Activated CD4-positive, alpha-beta T cell treated with anti-CD3 and anti-CD28 coated beads for 36 hours (primary cell): ENCODE measurements at regions of chr12 and their contacts with region 1.

Region 1: GRCh38 chr12:89352492-89353187 is at the start of gene DUSP6:
- DNase-seq: peak; percentile 96
- ATAC-seq: peak; percentile 83
- H3K4me3 Mint-ChIP-seq: peak within 1 kb of the TSS; percentile 86
- H3K27ac Mint-ChIP-seq: peak within 1 kb of the TSS; percentile 92
- H3K4me1 Mint-ChIP-seq: peaks cover 46% of the 10 kb centered on the region
- H3K27me3 Mint-ChIP-seq: no peaks in the 10 kb centered on the region
- total RNA-seq, gene DUSP6: 49.9 to 60.9 TPM

Region 2: DNA sequence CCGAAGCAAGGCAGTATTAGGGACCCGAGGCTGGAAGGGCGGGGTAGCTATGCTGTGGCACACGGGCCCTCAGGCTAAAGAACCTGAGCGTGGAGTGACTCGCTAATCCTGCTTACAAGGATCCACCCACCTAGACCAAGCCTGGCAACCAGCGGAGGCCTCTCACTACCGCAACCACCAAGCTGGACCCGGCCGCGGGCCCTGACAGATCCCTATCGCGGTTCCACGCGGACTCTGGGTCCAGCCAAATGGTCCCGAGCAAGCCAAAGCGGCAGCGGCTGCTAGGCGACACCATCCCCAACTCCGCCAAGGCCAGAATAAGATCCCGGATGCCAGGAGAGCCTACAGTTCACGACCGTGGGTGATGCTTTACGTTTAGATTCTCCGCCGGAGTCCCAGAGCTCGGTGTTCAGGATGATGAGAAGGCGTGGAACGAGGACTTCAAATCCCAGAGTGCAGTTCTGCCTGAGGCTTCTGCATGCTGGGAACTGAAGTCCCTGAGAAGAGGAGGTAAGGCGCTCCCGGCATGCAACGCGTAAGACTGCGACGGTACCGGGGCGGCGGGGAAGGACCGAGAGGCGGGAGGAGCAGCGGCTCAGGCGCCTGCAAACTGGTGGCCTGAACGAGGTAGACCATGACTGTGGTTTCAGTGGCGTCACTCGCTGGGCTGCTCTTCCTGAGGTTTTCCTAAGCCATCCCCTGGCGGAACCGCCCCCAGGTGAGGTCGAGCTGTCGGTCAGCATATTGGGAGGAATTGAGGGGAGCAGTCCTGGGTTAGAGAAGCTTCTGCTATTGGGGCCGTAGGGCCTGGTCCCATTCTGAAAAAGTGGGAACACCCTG is 1210.7 kb before region 1 on chr12 and contains the starts of genes CEP290 and TMTC3:
- CTCF ChIA-PET with region 1: no interaction called
- POLR2A ChIA-PET with region 1: no interaction called
- intact Hi-C with region 1: loop called in 1 of 2 experiments (anchors 1 kb)
- DNase-seq: peak; percentile 95
- ATAC-seq: peak; percentile 98
- H3K4me3 Mint-ChIP-seq: peak within 1 kb of the TSS; percentile 94
- H3K27ac Mint-ChIP-seq: peak within 1 kb of the TSS; percentile 92
- H3K4me1 Mint-ChIP-seq: peaks cover 42% of the 10 kb centered on the region
- H3K27me3 Mint-ChIP-seq: no peaks in the 10 kb centered on the region
- total RNA-seq, gene CEP290: 15.5 to 17.0 TPM
- total RNA-seq, gene TMTC3: 5.8 to 6.2 TPM

Region 3: GRCh38 chr12:89073027-89073398 is 279.6 kb before region 1 on chr12:
- CTCF ChIA-PET with region 1: interaction called, 4 read pairs
- POLR2A ChIA-PET with region 1: interaction called, 5 read pairs
- intact Hi-C with region 1: loop called (anchors 1 to 2 kb)
- DNase-seq: peak; percentile 42
- ATAC-seq: peak; percentile 20
- H3K4me3 Mint-ChIP-seq: no peak overlapping the region
- H3K27ac Mint-ChIP-seq: peak overlapping the region; percentile 91
- H3K4me1 Mint-ChIP-seq: peaks cover 44% of the 10 kb centered on the region
- H3K27me3 Mint-ChIP-seq: no peaks in the 10 kb centered on the region

Region 4: DNA sequence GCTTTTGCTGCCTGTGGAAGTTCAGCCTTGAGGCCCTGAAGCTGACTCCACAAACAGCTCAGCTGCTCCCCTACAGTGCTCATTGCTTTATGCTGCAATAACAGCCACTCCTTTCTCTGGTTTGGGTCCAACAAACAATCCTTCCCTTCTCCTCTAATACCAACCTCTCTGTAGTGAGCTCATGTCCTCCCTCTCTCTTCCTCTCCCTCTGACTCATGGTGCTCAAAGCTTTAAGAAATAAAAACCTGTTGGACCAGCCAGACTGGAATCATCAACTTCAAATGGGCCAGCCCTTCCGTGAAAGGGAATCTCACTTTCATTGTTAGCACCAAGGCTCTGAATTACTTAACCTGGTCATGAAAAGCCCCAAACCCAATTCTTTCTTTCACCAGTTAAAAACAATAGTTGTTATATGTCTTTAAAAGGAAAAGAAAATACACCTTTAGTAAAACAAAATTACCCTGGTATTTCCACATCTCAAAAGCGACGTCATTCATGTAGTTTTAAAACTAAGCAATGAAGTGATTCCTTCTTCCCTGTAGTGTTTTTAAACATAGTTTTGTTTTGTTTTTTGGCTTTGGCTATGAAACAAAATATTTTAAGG is 126.7 kb before region 1 on chr12:
- CTCF ChIA-PET with region 1: interaction called, 6 read pairs
- POLR2A ChIA-PET with region 1: interaction called, 17 read pairs
- intact Hi-C with region 1: loop called (anchors 1 kb)
- DNase-seq: peak; percentile 71
- ATAC-seq: peak; percentile 80
- H3K4me3 Mint-ChIP-seq: peak overlapping the region; percentile 58
- H3K27ac Mint-ChIP-seq: peak overlapping the region; percentile 99
- H3K4me1 Mint-ChIP-seq: peaks cover 68% of the 10 kb centered on the region
- H3K27me3 Mint-ChIP-seq: no peaks in the 10 kb centered on the region

Region 5: DNA sequence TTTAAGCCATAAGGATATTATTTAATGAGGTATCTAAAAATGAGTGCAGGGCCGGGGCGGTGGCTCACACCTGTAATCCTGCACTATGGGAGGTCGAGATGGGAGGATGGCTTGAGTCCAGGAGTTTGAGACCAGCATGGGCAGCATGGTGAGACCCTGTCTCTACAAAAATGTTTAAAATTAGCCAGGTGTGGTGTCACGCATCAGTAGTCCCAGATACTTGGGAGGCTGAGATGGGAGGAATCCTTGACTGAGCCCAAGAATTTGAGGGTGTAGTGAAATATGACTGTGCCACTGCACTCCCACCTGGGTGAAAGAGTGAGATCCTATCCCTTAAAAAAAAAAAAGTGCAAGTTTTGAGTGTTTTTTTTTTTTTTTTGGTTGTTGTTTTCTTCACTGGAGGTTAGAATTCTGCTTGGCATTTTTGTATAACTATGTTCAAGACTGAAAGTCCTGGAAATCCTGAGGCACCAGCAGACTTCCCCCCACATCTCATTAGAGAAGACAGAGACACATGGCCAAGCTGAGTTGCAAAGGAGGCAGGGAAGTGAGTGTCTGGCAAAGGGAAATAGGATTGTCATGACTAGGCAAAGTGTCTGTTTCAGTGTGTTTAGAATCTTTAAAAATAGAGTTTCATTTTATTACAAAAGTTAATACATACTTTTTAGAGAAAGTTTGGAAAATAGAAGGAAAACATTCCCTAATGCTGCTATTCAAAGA is 53.1 kb after region 1 on chr12:
- CTCF ChIA-PET with region 1: no interaction called
- POLR2A ChIA-PET with region 1: no interaction called
- intact Hi-C with region 1: loop called in 1 of 2 experiments (anchors 1 kb)
- DNase-seq: no peak
- ATAC-seq: no peak
- H3K4me3 Mint-ChIP-seq: no peak overlapping the region
- H3K27ac Mint-ChIP-seq: no peak overlapping the region
- H3K4me1 Mint-ChIP-seq: no peaks in the 10 kb centered on the region
- H3K27me3 Mint-ChIP-seq: no peaks in the 10 kb centered on the region

Region 6: GRCh38 chr12:89524541-89525285 is 172.1 kb after region 1 on chr12 and contains the start of gene GALNT4:
- CTCF ChIA-PET with region 1: no interaction called
- POLR2A ChIA-PET with region 1: interaction called, 3 read pairs
- intact Hi-C with region 1: loop called (anchors 1 to 2 kb)
- DNase-seq: peak; percentile 84
- ATAC-seq: peak; percentile 64
- H3K4me3 Mint-ChIP-seq: peak within 1 kb of the TSS; percentile 81
- H3K27ac Mint-ChIP-seq: peak within 1 kb of the TSS; percentile 94
- H3K4me1 Mint-ChIP-seq: peaks cover 53% of the 10 kb centered on the region
- H3K27me3 Mint-ChIP-seq: no peaks in the 10 kb centered on the region
- total RNA-seq, gene GALNT4: 3.0 to 4.6 TPM